GM12878 (cell line): ENCODE measurements at regions of chr1 and their contacts with region 1.

Region 1: GRCh38 chr1:24964811-24965570 is 34.9 kb upstream of the RUNX3 start:
- DNase-seq: peak; percentile 96
- ATAC-seq: peak; percentile 81
- H3K4me3 ChIP-seq: peak overlapping the region; percentile 97
- H3K27ac ChIP-seq: peak overlapping the region; percentile 98
- H3K4me1 ChIP-seq: peaks cover 29% of the 10 kb centered on the region
- H3K27me3 ChIP-seq: no peaks in the 10 kb centered on the region
- CTCF ChIP-seq: no peak
- EP300 ChIP-seq: peak in 1 of 2 experiments; percentile 84; a peak in 3 of 4 replicates
- POLR2A ChIP-seq: peak; percentile 86
- RAD21 ChIP-seq: peak; percentile 19; the same call in 1 of the 2 replicates

Region 2: DNA sequence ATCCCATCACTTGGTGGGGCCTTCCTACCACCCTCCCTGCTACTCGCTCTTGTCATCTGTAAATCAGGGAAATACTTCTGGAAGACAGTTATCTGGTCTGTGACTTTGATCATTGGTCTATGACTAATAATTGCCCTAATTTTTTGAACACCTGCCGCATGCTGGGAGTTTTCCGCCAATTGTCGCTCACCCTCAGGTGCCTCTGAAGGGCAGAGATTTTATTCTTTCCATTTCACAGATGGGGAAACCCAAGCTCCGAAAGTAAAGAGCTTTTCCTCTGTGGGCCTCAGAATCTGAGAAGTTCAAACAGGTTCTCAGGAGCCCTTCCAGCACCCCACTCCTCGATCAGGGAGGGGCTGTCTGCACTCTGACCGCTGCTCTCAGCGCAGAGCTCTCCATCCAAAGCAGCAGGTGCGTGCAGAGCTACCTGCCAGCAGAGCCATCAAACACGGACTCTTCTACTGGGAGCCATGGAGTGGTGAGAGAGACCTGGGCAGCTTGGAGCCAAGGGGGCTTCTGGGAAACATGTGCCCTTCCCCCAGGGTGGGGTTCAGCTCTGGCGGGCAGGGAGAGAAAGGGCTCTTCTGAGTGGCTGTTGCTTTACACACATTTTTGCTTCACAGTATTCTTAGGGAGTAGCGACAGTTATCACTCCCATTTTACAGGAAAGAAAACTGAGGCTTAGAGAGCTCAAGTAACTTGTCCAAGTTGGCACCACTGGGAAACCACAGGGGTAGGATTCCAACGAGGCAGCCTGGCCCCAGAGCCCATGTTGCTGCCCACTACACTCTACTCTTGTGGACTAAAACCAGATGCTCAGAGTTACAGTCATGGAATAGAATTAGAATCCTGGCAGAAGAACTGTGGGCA is 29.1 kb before region 1 on chr1:
- CTCF ChIA-PET with region 1: interaction called, 314 read pairs
- POLR2A ChIA-PET with region 1: interaction called, 11 read pairs
- RAD21 ChIA-PET with region 1: interaction called, 121 read pairs
- SMC1A ChIA-PET with region 1: interaction called, 391 read pairs
- in situ Hi-C with region 1: no loop called
- intact Hi-C with region 1: loop called (anchors 2 kb)
- DNase-seq: peak; percentile 74
- ATAC-seq: peak; percentile 56
- H3K4me3 ChIP-seq: peak overlapping the region; percentile 17; the same call in 1 of the 2 replicates
- H3K27ac ChIP-seq: peak overlapping the region; percentile 61
- H3K4me1 ChIP-seq: peaks cover 52% of the 10 kb centered on the region
- H3K27me3 ChIP-seq: no peaks in the 10 kb centered on the region
- CTCF ChIP-seq: no peak
- EP300 ChIP-seq: no peak
- POLR2A ChIP-seq: peak; percentile 44; the same call in 1 of the 2 replicates
- RAD21 ChIP-seq: no peak

Region 3: GRCh38 chr1:24946861-24947658 is 17.9 kb before region 1 on chr1:
- CTCF ChIA-PET with region 1: interaction called, 38 read pairs
- POLR2A ChIA-PET with region 1: interaction called, 35 read pairs
- RAD21 ChIA-PET with region 1: interaction called, 20 read pairs
- SMC1A ChIA-PET with region 1: interaction called, 391 read pairs
- in situ Hi-C with region 1: no loop called
- intact Hi-C with region 1: no loop called
- DNase-seq: peak; percentile 70
- ATAC-seq: peak; percentile 84
- H3K4me3 ChIP-seq: 0 out of 2 replicates have a peak overlapping the region, but pooled peaks have one; percentile 44
- H3K27ac ChIP-seq: peak overlapping the region; percentile 85
- H3K4me1 ChIP-seq: peaks cover 56% of the 10 kb centered on the region
- H3K27me3 ChIP-seq: no peaks in the 10 kb centered on the region
- CTCF ChIP-seq: no peak
- EP300 ChIP-seq: peak; percentile 22 to 47; a peak in 2 of 4 replicates
- POLR2A ChIP-seq: peak; percentile 61; the same call in 1 of the 2 replicates
- RAD21 ChIP-seq: no peak

Region 4: DNA sequence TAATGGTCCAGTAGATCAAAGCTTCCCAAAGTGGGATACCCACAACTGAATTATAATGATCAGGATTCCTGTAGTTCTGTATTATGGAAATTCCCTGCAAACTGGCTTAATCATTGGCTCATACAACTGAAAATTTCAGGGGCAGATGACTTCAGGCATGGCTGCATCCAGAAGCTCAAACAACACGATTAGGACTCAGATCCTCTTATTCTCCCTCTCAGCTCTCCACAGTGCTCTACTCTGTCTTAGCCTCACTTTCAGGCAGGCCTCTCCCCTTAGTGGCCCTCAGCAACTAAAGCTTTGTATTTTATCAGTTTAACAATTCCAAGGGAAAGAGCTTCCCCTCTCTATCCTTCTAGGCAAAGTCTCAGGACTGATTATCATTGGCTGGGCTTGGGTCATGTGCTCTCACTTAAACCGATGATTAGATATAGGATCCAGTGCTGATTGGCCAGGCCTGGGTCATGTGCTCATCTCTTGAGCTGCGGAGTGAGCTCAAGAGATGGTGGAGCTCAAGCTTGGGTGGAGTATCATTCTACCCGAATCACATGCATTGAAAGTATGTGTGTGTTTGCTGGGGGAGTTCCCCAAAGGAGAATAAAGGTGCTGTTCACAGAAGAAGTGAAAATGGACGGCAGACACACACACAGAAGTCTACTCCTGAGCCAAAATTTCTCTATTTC is 23.0 kb after region 1 on chr1:
- CTCF ChIA-PET with region 1: interaction called, 5 read pairs
- POLR2A ChIA-PET with region 1: interaction called, 11 read pairs
- RAD21 ChIA-PET with region 1: interaction called, 11 read pairs
- SMC1A ChIA-PET with region 1: interaction called, 11 read pairs
- in situ Hi-C with region 1: no loop called
- intact Hi-C with region 1: no loop called
- DNase-seq: peak; percentile 42
- ATAC-seq: peak; percentile 93
- H3K4me3 ChIP-seq: no peak overlapping the region
- H3K27ac ChIP-seq: no peak overlapping the region
- H3K4me1 ChIP-seq: peaks cover 12% of the 10 kb centered on the region
- H3K27me3 ChIP-seq: no peaks in the 10 kb centered on the region
- CTCF ChIP-seq: no peak
- EP300 ChIP-seq: peak in 1 of 2 experiments; percentile 10; a peak in 1 of 4 replicates
- POLR2A ChIP-seq: no peak
- RAD21 ChIP-seq: 0 out of 2 replicates have a peak, but pooled peaks have one; percentile 5

Region 5: DNA sequence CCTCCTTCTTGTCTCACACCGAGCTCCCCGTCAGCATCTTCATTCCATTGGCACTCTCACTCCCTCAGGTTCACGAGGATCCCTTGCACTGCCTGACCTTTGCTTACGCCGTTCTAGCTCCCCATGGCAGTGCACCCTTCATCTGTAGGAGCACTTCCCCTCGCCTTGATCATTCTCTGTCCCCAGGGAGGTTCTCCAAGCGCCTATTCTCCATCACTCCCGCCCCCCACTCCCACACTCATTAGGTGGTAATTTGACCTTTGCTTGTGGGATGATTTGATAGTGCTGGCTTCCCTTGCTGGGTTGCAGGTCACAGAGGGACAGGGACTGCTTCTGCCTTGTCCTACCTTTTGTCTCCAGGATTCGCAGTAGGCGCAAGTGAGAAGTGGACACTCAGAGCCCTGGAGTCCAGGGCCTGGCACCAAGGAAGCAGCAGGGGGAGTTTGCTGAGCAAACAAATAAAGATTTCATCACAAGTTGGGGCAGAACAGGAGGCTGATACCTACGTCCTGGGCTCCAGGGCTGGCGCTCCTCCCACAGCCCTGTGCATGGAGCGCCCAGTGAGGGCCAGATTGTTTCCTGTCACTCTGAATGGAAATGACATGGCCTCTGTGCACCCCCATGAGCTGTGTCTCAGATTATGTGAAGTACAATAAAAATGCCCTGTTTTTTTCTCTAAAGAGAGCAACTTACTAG is 47.1 kb after region 1 on chr1:
- CTCF ChIA-PET with region 1: interaction called, 6 read pairs
- POLR2A ChIA-PET with region 1: interaction called, 6 read pairs
- RAD21 ChIA-PET with region 1: interaction called, 4 read pairs
- SMC1A ChIA-PET with region 1: interaction called, 13 read pairs
- in situ Hi-C with region 1: no loop called
- intact Hi-C with region 1: no loop called
- DNase-seq: no peak
- ATAC-seq: no peak
- H3K4me3 ChIP-seq: no peak overlapping the region
- H3K27ac ChIP-seq: no peak overlapping the region
- H3K4me1 ChIP-seq: peaks cover 3% of the 10 kb centered on the region; the same call in 1 of the 2 replicates
- H3K27me3 ChIP-seq: no peaks in the 10 kb centered on the region
- CTCF ChIP-seq: no peak
- EP300 ChIP-seq: no peak
- POLR2A ChIP-seq: no peak
- RAD21 ChIP-seq: no peak

Region 6: DNA sequence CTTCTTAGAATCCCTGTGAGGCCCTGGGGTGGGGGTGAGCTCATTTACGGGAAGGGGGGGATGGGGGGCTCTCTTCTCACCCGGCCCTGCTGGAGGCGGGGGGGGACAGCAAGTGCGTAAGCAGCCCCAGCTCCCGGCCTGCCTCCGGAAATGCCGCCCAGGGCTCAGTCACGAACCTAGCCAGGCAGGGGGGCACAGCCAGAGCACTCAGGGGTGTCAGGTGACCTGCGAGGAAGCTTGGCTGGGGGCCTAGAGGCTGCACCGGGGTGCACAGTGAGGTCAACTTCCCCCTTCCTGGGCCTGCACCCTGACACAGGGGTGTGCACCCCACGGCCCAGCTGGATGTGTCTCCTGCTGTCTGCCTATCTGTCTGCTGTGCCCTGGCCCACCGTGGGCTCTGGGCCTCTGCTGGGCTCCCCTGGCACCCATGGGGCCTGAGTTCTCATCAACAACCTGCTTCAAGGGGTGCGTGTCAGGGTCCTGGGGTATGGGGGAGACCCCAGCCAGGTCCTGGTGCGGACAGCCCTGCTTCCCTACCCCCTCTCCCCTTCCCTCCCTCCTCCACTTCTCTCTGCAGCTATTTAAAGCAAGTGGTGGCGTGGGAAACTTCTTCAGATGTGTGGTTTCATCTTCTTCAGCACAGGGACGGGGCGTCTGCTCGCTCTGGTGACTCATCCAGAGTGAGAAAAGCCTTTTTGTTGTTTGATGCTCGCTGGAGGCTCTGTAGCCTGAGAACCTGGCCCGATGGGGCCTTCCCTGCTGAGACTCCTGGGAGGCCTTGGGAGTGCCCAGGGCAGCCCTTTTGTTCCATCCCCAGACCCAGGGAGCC is 57.6 kb after region 1 on chr1:
- CTCF ChIA-PET with region 1: interaction called, 152 read pairs
- POLR2A ChIA-PET with region 1: interaction called, 220 read pairs
- RAD21 ChIA-PET with region 1: interaction called, 148 read pairs
- SMC1A ChIA-PET with region 1: interaction called, 205 read pairs
- in situ Hi-C with region 1: no loop called
- intact Hi-C with region 1: loop called (anchors 1 kb)
- DNase-seq: peak; percentile 97
- ATAC-seq: peak; percentile 85
- H3K4me3 ChIP-seq: peak overlapping the region; percentile 56
- H3K27ac ChIP-seq: peak overlapping the region; percentile 100
- H3K4me1 ChIP-seq: peaks cover 94% of the 10 kb centered on the region
- H3K27me3 ChIP-seq: no peaks in the 10 kb centered on the region
- CTCF ChIP-seq: no peak
- EP300 ChIP-seq: peak; percentile 96 to 97
- POLR2A ChIP-seq: no peak
- RAD21 ChIP-seq: peak; percentile 34

Region 7: DNA sequence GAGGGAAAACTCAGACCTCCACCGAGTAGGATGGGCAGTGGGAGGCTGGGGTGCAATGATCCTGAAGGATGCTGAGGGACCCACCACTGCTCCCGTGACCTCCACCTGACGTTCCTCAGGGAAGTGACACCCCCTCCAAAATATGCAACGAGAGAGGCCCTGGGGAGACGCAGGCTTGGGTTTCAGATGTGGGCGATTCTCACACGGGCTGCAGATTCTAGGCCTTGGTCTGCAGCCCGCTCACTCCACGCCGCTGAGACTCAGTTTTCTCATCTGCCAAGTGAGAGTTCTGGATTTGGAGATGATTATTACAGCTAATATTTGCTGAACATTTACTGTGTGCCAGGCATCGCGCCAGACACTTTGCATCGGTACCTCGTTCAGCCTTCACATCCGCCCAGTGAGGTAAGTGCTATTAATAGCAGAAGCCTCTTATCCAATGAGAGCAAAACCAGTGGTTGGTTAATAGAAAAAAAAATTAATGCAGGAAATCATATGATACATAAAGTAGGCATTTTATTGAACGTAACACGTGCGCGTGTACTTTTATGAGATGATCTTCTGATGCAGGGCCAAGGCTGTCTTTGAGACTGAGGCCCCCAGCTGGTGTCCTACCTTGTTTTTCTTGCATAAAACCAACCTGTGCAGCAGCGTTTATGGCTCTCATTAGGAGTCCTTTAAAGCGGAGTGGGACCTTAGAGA is 67.1 kb after region 1 on chr1:
- CTCF ChIA-PET with region 1: interaction called, 396 read pairs
- POLR2A ChIA-PET with region 1: interaction called, 220 read pairs
- RAD21 ChIA-PET with region 1: interaction called, 214 read pairs
- SMC1A ChIA-PET with region 1: interaction called, 292 read pairs
- in situ Hi-C with region 1: loop called (anchors 5 kb)
- intact Hi-C with region 1: loop called (anchors 1 kb)
- DNase-seq: peak; percentile 94
- ATAC-seq: peak; percentile 44
- H3K4me3 ChIP-seq: peak overlapping the region; percentile 73
- H3K27ac ChIP-seq: peak overlapping the region; percentile 100
- H3K4me1 ChIP-seq: peaks cover 93% of the 10 kb centered on the region
- H3K27me3 ChIP-seq: no peaks in the 10 kb centered on the region
- CTCF ChIP-seq: peak in 1 of 3 experiments; percentile 30; a peak in 1 of 6 replicates
- EP300 ChIP-seq: peak in 1 of 2 experiments; percentile 17; a peak in 1 of 4 replicates
- POLR2A ChIP-seq: peak; percentile 66
- RAD21 ChIP-seq: peak; percentile 33; the same call in 1 of the 2 replicates

Region 8: DNA sequence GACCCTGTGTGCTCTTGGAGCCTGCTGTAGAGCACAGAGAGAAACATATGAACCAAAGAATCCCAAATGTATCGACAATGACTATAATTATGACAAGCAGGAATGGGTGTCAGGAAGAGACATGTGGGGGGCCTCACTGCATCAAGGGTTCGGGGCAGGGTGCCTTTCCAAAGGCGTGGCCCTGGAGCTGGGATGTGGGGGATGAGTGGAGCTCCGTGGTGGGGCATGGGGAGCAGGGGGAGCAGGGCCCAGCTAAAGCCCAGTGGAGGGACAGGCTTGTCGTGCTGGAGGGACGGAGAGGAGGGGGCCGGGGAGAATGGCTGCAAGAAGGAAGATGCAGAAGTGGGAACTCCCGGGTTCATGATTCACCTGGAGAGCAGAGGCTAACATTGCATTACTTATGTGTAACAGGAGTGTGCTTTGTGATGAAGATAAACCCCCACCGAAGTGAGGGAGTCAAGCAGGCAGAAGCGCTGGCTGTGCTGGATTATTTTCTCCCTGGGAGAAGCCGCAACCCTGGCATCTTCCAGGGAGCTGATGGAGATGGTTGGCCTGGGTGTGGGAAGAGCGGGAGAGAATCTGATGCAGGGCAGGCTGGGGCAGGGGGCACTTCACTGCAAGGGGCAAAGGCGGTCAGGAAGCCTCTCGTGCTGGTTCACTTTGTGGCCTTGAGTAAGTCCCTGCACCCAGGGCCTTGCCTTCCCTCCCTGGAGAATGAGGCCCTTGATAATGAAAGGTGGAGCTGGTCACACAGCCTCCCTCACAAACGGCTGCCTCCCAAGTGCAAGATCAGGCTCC is 89.7 kb after region 1 on chr1:
- CTCF ChIA-PET with region 1: no interaction called
- POLR2A ChIA-PET with region 1: no interaction called
- RAD21 ChIA-PET with region 1: no interaction called
- SMC1A ChIA-PET with region 1: no interaction called
- in situ Hi-C with region 1: no loop called
- intact Hi-C with region 1: no loop called
- DNase-seq: no peak
- ATAC-seq: no peak
- H3K4me3 ChIP-seq: no peak overlapping the region
- H3K27ac ChIP-seq: no peak overlapping the region
- H3K4me1 ChIP-seq: no peaks in the 10 kb centered on the region
- H3K27me3 ChIP-seq: peaks cover 5 to 6% of the 10 kb centered on the region in 2 experiments; a peak in 3 of 4 replicates
- CTCF ChIP-seq: no peak
- EP300 ChIP-seq: no peak
- POLR2A ChIP-seq: no peak
- RAD21 ChIP-seq: no peak